AG04449 (cell line): ENCODE measurements at regions of chr6 and their contacts with region 1.

Region 1: GRCh38 chr6:37483917-37484785 is 15.5 kb downstream of the CCDC167 start:
- DNase-seq: no peak
- H3K4me3 ChIP-seq: no peak overlapping the region
- CTCF ChIP-seq: peak; percentile 98

Region 2: DNA sequence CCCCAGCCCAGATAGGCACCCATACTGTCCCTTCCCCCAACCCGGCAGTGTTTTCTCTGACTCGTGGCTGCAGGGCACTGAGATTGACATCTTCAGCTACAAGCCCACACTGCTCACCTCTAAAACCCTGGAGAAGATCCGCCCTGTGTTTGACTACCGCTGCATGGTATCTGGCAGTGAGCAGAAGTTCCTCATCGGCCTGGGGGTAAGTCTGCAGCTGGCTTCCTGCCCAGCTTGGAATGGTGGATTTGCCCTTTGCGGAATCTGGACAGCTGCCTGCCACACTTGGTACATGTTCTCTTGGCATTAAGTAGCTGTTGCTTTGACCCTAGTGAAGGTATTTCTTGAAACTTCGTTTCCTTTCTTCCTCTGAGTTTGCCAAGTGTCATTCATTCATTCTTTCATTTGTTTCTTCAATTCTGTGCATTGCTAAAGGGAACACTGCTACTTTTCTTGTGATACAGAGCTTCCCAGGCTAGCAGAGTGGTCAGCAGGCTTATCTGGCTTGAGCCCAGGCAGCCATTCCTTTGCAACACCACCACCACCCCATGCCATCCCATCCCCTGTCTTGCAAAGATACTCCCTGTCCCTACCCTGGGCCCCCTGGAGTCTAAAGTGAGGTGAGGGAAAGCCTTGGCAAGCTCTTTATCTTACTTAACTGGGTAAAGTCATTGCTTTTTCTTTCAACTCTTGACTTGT is 10.6 kb before region 1 on chr6:
- CTCF ChIA-PET with region 1: interaction called, 10 read pairs
- POLR2A ChIA-PET with region 1: no interaction called
- DNase-seq: no peak
- H3K4me3 ChIP-seq: no peak overlapping the region
- CTCF ChIP-seq: no peak

Region 3: GRCh38 chr6:37643851-37644672 is 159.9 kb after region 1 on chr6:
- CTCF ChIA-PET with region 1: no interaction called
- POLR2A ChIA-PET with region 1: no interaction called
- DNase-seq: no peak
- H3K4me3 ChIP-seq: no peak overlapping the region
- CTCF ChIP-seq: no peak